Caco-2 (cell line): ENCODE measurements at regions of chr11 and their contacts with region 1.

Region 1: DNA sequence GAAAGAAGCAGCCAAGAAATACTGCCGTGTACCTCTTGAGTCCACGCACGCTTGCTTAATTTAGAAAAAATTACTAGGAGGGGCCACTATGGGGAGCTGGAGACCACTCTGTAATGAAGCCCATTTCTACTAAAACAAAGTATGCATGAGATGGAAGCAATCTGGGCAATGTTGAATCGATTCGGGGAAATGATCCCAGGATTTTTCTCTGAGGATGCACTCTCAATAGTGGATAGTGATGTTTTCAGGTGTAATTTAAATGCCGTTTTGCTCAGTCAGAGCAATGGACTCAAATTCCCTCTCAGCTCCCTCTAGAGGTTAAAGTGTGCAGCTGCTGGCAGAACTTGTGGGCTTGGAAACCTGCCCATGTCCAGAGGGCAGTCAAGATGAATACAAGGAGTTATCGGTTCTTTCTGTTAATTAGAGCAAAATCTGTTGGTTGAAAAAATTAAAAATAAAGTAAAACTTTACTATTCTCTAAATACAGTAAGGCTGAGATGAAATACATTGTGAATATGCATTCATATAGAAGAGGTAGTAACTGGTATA is 64.1 kb downstream of the ME3 start:
- DNase-seq: peak; percentile 76
- H3K4me3 ChIP-seq: no peak overlapping the region
- H3K4me3 Mint-ChIP-seq: peak overlapping the region; percentile 45
- H3K27ac Mint-ChIP-seq: no peak overlapping the region
- H3K4me1 ChIP-seq: peaks cover 7% of the 10 kb centered on the region; the same call in 1 of the 2 replicates
- H3K4me1 Mint-ChIP-seq: peaks cover 23% of the 10 kb centered on the region
- H3K27me3 ChIP-seq: no peaks in the 10 kb centered on the region
- H3K27me3 Mint-ChIP-seq: no peaks in the 10 kb centered on the region
- CTCF ChIP-seq: peak; percentile 95 to 99

Region 2: DNA sequence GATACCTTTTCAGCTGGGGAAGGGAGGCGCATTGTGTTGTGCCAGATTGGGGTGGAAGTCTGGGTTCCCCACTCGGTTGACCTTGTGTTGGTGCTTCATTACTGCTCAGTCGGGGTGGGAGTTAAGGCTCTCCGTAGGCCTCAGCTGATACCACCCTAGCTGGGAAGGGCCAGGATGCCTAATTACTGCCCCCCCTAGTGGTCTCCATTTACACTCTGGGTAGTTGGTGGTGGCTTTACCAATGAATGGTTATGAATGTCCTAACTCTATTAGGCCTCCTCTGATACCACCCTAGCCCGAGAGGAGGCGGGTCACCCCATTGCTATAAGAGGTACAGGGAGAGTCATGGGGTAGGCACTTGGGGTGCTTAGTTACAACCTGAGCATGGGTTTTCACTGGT is 333.8 kb before region 1 on chr11:
- CTCF ChIA-PET with region 1: no interaction called
- POLR2A ChIA-PET with region 1: no interaction called
- intact Hi-C with region 1: no loop called
- DNase-seq: peak in 1 of 2 experiments; percentile 57
- H3K4me3 ChIP-seq: no peak overlapping the region
- H3K4me3 Mint-ChIP-seq: no peak overlapping the region
- H3K27ac Mint-ChIP-seq: no peak overlapping the region
- H3K4me1 ChIP-seq: no peaks in the 10 kb centered on the region
- H3K4me1 Mint-ChIP-seq: peaks cover 10% of the 10 kb centered on the region
- H3K27me3 ChIP-seq: no peaks in the 10 kb centered on the region
- H3K27me3 Mint-ChIP-seq: no peaks in the 10 kb centered on the region
- CTCF ChIP-seq: peak; percentile 46 to 54

Region 3: DNA sequence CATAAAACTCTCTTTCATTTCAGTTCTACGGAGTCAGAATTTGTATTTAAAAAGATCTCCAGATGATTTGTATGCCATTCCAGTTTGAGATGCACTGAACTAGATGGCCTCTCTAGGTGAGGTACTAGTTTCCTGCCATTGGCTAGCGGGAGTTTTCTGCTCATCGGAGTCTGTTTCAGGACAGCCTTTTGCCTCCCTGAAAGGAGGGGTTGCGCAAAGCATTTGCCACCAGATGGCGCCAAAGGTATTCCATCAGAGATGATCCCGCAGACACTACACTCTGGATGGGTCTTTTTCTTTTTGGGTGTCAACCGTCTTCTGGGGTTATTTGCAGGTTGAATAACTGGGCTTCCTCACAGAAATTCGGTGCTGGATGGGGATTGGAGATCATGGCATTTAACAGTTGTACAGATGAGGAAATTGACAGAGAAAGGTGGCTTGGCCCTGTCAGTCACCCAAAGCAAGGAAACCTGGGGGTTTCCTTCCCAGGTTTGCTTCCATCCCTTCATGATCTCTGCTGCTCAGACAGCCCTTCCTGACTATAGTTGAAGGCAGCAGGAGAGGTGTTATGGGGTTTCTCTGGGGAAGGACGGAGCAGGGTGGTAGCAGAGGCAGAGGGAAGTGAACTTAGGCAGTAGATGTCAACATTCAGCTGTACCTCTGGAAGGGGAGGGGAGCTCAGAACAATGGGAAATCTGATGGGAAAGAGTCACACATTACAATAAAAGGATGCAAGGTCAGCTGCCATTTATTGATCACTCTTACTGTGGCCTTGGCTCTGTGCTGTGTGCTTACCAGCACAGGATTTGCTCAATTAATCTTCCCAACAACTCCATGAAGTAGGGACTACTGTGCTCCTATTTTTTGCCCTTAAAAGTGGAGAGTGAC is 152.0 kb before region 1 on chr11:
- CTCF ChIA-PET with region 1: interaction called, 25 read pairs
- POLR2A ChIA-PET with region 1: no interaction called
- intact Hi-C with region 1: loop called (anchors 1 kb)
- DNase-seq: peak; percentile 91 to 93
- H3K4me3 ChIP-seq: no peak overlapping the region
- H3K4me3 Mint-ChIP-seq: no peak overlapping the region
- H3K27ac Mint-ChIP-seq: peak overlapping the region; percentile 65
- H3K4me1 ChIP-seq: peaks cover 29% of the 10 kb centered on the region
- H3K4me1 Mint-ChIP-seq: peaks cover 41% of the 10 kb centered on the region
- H3K27me3 ChIP-seq: no peaks in the 10 kb centered on the region
- H3K27me3 Mint-ChIP-seq: no peaks in the 10 kb centered on the region
- CTCF ChIP-seq: peak; percentile 98

Region 4: DNA sequence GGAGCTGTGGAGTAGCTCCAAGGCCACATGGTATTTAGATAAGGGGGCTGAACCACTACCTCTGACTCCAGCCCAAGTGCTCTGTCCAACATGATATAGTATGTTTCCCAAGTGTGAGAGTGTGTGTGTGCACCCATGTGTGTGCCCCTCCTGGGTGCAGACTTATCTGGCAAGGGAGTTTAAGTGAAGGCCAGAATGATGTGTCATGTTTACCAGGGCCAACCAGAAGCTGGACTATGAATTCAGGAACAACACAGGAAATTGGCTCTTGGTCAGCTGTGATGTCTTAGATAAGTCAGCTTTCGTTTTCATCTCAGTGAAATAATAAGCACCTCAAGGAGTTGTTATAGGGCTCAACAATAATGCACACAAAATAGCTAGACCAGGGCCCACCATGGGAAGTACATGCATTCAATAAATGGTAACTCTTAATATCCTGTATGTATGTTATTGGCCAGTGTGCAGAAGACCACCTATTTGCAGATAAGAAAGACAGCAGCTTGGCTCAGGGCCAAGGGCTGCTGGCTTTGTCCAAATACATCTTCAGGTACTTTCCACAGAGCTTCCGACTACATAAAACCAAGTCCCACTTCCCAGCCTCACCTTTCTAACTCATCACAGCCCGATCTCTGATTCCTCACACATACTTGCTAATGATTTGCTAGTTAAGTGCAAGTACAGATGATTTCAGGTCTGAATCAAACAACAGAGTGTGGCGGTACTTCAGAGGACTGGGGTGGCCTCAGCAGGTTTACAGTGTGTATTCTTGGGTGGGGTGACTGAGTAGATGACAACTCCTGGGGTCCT is 56.8 kb before region 1 on chr11:
- CTCF ChIA-PET with region 1: no interaction called
- POLR2A ChIA-PET with region 1: no interaction called
- intact Hi-C with region 1: no loop called
- DNase-seq: no peak
- H3K4me3 ChIP-seq: no peak overlapping the region
- H3K4me3 Mint-ChIP-seq: no peak overlapping the region
- H3K27ac Mint-ChIP-seq: no peak overlapping the region
- H3K4me1 ChIP-seq: peaks cover 9% of the 10 kb centered on the region
- H3K4me1 Mint-ChIP-seq: peaks cover 18% of the 10 kb centered on the region
- H3K27me3 ChIP-seq: no peaks in the 10 kb centered on the region
- H3K27me3 Mint-ChIP-seq: no peaks in the 10 kb centered on the region
- CTCF ChIP-seq: no peak

Region 5: DNA sequence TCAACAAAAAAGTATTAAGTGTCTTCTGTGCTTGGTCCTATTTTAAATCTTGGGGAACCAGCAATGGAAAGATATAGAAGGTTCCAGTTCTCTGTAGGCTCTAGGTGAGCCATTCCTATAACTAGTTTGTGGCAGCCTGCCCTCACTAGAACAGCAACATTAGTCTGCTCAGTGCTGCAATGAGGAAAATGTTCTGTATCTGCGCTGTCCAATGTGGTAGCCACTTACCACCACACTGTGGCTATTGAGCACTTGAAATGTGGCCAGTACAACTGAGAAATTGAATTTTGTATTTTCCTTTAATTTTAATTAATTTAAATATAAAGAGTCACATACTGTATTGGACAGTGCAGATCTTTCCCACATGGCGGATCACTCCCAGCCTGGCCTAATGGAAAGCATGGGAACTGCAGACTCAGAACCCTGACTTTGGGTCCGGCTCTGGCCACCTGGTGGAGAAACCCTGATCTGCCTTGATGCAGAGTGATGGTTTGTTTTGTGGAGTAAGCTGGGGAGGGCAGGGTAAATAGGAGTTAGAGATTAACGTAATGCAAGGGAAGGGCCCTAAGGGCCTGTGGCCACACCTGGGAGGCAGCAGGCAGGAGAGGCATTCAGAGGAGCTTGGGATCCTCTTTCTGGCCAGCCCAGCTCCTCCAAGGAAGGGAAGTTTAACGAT is 36.9 kb before region 1 on chr11:
- CTCF ChIA-PET with region 1: interaction called, 23 read pairs
- POLR2A ChIA-PET with region 1: no interaction called
- intact Hi-C with region 1: no loop called
- DNase-seq: peak; percentile 93
- H3K4me3 ChIP-seq: no peak overlapping the region
- H3K4me3 Mint-ChIP-seq: peak overlapping the region; percentile 6
- H3K27ac Mint-ChIP-seq: peak overlapping the region; percentile 2
- H3K4me1 ChIP-seq: peaks cover 32% of the 10 kb centered on the region
- H3K4me1 Mint-ChIP-seq: peaks cover 37% of the 10 kb centered on the region
- H3K27me3 ChIP-seq: no peaks in the 10 kb centered on the region
- H3K27me3 Mint-ChIP-seq: no peaks in the 10 kb centered on the region
- CTCF ChIP-seq: peak; percentile 95 to 96

Region 6: DNA sequence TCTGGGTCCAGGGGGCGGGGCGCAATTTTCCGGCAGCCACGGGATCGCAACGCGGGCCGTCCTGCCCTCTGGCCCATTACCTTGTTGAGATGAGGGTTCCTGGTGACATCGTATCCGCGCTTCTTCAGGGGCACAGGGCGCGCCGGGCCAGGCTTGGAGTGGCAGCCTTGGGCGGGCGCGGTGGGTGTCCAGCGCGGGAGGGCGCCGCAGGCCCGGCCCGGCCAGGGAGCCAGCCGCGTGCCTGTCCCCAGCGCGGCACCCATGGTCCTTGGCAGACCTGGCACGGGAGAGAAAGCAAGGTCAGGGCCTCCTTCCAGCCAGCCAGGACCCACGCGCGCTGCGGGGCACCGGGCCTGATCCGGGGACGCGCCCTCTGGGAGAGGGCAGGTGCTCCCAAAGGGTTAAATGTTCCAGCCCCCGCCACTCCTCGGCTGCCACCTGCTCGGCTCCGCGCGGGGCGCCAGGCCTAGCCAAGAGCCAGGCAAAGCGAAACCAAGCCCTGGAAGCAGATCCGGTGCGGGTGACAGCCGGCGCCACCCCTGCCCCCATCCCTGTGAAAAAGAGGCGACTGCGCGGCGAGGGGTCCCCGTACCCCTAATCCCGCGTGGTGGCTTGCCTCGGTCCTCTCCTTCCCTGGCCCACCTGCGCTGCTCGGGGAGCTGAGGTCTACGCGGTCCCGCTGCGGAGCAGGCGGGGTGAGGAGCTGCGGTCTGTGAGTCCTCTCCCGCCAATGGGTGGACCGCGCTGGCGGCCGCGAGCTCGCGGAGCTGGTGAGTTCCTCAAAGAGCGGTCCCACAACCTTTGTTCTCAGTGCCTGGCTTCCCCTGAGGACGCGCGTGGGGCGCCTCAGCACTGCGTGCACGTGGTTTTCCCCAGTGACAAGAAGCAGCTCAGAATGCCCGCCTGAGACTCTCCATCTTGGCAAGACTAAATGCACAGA is 63.6 kb after region 1 on chr11 and contains the start of gene ME3:
- CTCF ChIA-PET with region 1: interaction called, 12 read pairs
- POLR2A ChIA-PET with region 1: no interaction called
- intact Hi-C with region 1: loop called (anchors 2 kb)
- DNase-seq: peak; percentile 87 to 90
- H3K4me3 ChIP-seq: peak within 1 kb of the TSS; percentile 95
- H3K4me3 Mint-ChIP-seq: peak within 1 kb of the TSS; percentile 84
- H3K27ac Mint-ChIP-seq: peak within 1 kb of the TSS; percentile 87
- H3K4me1 ChIP-seq: peaks cover 50% of the 10 kb centered on the region
- H3K4me1 Mint-ChIP-seq: peaks cover 76% of the 10 kb centered on the region
- H3K27me3 ChIP-seq: no peaks in the 10 kb centered on the region
- H3K27me3 Mint-ChIP-seq: no peaks in the 10 kb centered on the region
- CTCF ChIP-seq: peak; percentile 8 to 31
- total RNA-seq, gene ME3: 32.8 and 36.9 TPM in 2 replicates

Region 7: DNA sequence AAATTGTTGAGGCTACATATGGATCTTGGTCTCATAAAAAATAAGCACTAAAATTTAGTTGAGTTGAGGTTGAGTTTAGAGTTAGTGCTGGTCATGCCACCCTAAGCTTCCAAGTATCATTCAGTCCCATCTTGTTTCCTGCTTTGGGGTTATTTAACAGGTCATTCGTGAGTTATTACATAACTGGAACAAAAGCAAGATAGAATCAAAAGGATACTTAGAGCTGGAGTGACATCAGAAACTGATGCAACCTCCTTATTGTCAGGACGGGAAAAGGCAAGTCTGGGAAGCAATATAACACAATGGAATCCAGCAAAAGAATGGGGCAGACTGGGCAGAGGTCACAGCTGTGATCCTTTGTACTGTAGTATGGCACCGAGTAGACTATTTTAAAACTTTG is 187.6 kb after region 1 on chr11:
- CTCF ChIA-PET with region 1: interaction called, 39 read pairs
- POLR2A ChIA-PET with region 1: no interaction called
- intact Hi-C with region 1: no loop called
- DNase-seq: peak; percentile 77 to 81
- H3K4me3 ChIP-seq: no peak overlapping the region
- H3K4me3 Mint-ChIP-seq: peak overlapping the region; percentile 10
- H3K27ac Mint-ChIP-seq: peak overlapping the region; percentile 99
- H3K4me1 ChIP-seq: peaks cover 80% of the 10 kb centered on the region
- H3K4me1 Mint-ChIP-seq: peaks cover 69% of the 10 kb centered on the region
- H3K27me3 ChIP-seq: no peaks in the 10 kb centered on the region
- H3K27me3 Mint-ChIP-seq: no peaks in the 10 kb centered on the region
- CTCF ChIP-seq: no peak

Region 8: GRCh38 chr11:86848861-86849260 is 240.5 kb after region 1 on chr11:
- CTCF ChIA-PET with region 1: interaction called, 14 read pairs
- POLR2A ChIA-PET with region 1: no interaction called
- intact Hi-C with region 1: no loop called
- DNase-seq: no peak
- H3K4me3 ChIP-seq: no peak overlapping the region
- H3K4me3 Mint-ChIP-seq: no peak overlapping the region
- H3K27ac Mint-ChIP-seq: peak overlapping the region; percentile 65
- H3K4me1 ChIP-seq: peaks cover 68% of the 10 kb centered on the region
- H3K4me1 Mint-ChIP-seq: peaks cover 59% of the 10 kb centered on the region
- H3K27me3 ChIP-seq: no peaks in the 10 kb centered on the region
- H3K27me3 Mint-ChIP-seq: no peaks in the 10 kb centered on the region
- CTCF ChIP-seq: no peak